Breast epithelium (tissue), 4 donors: ENCODE measurements at regions of chrX and their contacts with region 1.

Region 1: GRCh38 chrX:150647331-150647730 is 45.9 kb upstream of the MTMR1 start:
- DNase-seq: no peak
- H3K4me3 ChIP-seq: no peak overlapping the region
- H3K27ac ChIP-seq: no peak overlapping the region
- H3K4me1 ChIP-seq: no peaks in the 10 kb centered on the region
- H3K27me3 ChIP-seq: no peaks in the 10 kb centered on the region
- CTCF ChIP-seq: no peak
- POLR2A ChIP-seq: no peak

Region 2: DNA sequence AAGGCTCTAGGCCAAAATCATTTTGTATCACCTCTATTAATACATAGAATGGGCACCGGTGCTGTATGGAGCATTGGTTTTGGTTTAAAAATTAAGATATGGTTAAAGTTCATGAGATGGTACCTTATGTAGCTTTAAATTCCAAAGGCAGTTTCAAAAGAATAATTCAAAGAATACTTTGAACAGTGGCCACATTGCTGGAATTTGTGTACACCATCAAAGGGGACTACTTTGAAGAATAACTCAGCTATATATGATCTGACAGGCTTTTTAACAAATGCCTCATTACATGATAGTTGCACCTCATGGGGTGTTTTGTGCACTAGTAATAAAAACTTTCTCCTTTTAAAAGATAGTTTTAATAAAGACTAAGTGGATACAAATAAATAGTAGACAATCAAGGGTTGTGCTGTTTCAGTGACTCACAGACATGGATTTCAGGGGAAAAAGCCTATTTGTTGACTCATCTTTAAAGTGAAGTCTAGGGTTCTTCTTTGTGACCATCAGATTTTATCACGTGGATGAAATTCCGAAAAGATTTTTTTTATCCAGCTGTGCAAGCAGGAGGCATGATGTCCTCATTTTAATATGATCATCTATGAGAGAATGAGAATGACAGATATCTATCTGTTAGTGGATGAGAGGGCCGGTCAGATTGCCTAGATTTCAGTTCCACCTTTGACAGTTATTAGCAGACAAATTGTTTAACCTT is 66.1 kb before region 1 on chrX:
- intact Hi-C with region 1: loop called (anchors 2 kb)
- DNase-seq: no peak
- H3K4me3 ChIP-seq: no peak overlapping the region
- H3K27ac ChIP-seq: no peak overlapping the region
- H3K4me1 ChIP-seq: no peaks in the 10 kb centered on the region
- H3K27me3 ChIP-seq: peaks cover 0 to 3% of the 10 kb centered on the region in 2 donors
- CTCF ChIP-seq: no peak
- POLR2A ChIP-seq: no peak